Activated CD4-positive, alpha-beta T cell treated with anti-CD3 and anti-CD28 coated beads, Interleukin-2, amount 10 ng/mL, durations not matched to agents 7 days and 5 days (primary cell): ENCODE measurements at regions of chr17 and their contacts with region 1.

Region 1: GRCh38 chr17:76353599-76354316 is at the start of gene PRPSAP1:
- DNase-seq: peak; percentile 85
- H3K4me3 Mint-ChIP-seq: peak within 1 kb of the TSS; percentile 83
- H3K27ac Mint-ChIP-seq: peak within 1 kb of the TSS; percentile 98
- H3K4me1 Mint-ChIP-seq: peaks cover 29% of the 10 kb centered on the region
- H3K27me3 Mint-ChIP-seq: no peaks in the 10 kb centered on the region
- total RNA-seq, gene PRPSAP1: 58.7 to 63.0 TPM

Region 2: GRCh38 chr17:76365256-76365903 is 11.6 kb after region 1 on chr17:
- CTCF ChIA-PET with region 1: interaction called, 11 read pairs
- POLR2A ChIA-PET with region 1: no interaction called
- DNase-seq: no peak
- H3K4me3 Mint-ChIP-seq: no peak overlapping the region
- H3K27ac Mint-ChIP-seq: no peak overlapping the region
- H3K4me1 Mint-ChIP-seq: peaks cover 2% of the 10 kb centered on the region
- H3K27me3 Mint-ChIP-seq: peaks cover 4% of the 10 kb centered on the region

Region 3: GRCh38 chr17:76437467-76438402 is 84.0 kb after region 1 on chr17:
- CTCF ChIA-PET with region 1: no interaction called
- POLR2A ChIA-PET with region 1: no interaction called
- DNase-seq: no peak
- H3K4me3 Mint-ChIP-seq: no peak overlapping the region
- H3K27ac Mint-ChIP-seq: no peak overlapping the region
- H3K4me1 Mint-ChIP-seq: peaks cover 21% of the 10 kb centered on the region
- H3K27me3 Mint-ChIP-seq: no peaks in the 10 kb centered on the region